Cardiac septum (tissue), 1 donor: ENCODE measurements at regions of chrX and their contacts with region 1.

Region 1: GRCh38 chrX:149992918-149993317 is 54.6 kb upstream of the EOLA2 start:
- DNase-seq: no peak

Region 2: GRCh38 chrX:149799938-149800337 is 193.0 kb before region 1 on chrX:
- intact Hi-C with region 1: no loop called
- DNase-seq: no peak

Region 3: GRCh38 chrX:149871940-149872339 is 121.0 kb before region 1 on chrX:
- intact Hi-C with region 1: no loop called
- DNase-seq: no peak

Region 4: GRCh38 chrX:149939796-149940673 is 52.9 kb before region 1 on chrX:
- intact Hi-C with region 1: no loop called
- DNase-seq: peak; percentile 97

Region 5: DNA sequence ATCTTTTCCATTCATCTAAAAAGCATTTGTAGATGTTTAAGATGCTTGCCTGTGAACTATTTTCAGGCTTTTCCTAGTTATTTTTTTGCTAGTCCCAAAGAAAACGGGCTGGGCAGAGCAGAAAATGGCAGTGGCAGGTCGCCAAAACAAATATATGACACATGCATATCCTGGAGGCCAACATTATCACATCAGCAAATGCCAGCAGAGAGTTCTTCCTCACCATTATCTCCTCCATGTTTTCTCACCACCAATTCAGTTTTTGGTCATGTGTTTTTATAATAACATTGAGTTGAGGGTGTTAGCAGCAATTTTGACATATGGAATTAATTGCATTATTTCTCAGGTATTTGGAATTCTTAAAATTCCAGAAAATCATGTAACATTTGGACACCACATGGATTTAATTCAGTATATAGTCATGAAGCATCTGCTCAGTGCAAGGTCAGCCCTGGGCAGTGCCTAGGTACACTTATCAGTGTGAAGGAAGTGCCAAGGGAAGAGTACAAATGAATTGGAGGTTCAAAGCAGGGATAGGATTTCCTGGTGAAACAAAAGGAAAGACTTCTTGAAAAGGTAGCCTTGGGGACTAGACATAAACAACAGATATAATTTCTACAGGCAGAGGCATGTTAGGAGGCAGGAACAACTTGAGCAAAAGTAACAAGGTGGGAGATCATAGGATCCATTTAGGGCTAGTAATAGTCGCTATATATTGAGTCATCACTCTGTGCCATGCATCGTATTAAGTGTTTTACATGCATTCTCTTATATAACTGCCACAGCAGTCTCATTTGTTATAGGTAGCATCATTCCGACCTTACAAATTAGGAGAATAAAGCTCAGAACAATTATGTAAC is 43.5 kb after region 1 on chrX:
- intact Hi-C with region 1: loop called (anchors 5 kb)
- DNase-seq: no peak

Region 6: DNA sequence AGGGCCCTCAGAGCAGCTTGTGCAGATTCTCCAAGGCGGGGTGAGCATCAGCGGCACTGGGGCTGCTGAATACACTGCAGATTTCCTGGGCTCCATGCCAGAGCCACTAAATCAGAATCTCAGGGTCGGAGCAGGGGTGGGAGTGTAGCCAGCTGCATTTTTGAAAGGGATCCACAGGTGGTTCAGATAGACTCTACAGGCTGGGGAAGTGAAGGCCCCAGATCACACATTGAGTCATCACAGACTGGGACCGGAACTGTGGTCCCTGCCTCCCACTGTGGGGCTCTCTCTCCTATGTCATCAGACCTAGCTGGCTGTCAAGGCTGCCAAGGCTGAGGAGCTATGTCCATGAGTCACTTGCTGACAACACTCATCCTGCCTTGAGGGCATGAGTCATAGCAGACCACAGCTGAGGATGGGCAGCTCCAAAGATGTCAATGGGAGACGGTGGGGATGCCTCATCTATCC is 207.9 kb after region 1 on chrX:
- intact Hi-C with region 1: loop called (anchors 10 kb)
- DNase-seq: no peak